Panc1 (cell line): ENCODE measurements at regions of chr11 and their contacts with region 1.

Region 1: DNA sequence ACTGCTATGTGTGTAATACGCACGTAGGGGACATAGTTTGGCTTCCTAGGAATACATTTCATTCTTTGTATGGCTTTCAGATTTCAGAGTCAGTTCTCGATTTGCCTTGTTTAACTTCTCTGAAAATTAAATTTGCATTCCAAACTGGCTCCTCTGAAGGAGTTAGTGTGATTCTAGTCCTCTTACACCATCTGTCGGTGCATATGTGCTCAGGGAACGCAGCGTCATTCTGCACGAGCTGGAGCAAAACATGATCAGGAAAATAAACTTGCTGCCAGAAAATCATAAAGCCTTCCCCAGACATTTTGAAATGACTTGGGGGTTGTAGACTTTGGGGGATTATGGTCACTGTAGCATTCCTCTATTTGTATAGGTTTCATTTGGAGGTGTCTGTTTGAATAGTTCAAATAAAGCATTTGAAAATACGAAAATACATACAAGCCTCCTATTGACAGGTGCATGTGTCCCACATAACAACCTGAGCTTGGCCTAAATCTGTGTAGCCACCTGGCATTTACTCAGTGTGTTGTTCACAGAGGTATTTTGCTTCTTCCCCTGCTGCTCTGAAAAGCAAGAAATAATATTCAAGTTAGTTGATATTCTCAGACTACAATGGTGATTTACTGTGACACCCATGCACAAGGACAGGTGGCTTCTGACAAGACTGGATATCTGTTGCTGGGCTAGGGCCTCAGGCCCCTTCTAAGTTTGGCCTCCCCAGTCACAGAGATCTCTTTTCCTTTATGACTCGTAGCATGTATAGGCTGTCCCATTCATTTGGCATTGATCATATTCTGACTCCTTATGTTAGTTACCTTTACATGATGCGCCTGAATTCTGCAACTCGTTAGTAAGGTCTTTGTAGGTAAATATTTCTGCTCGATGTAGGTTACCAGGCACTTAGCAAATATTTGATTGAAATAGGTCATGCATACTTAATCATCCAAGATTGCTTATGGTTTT is 81.6 kb upstream of the SORL1-AS1 start:
- DNase-seq: no peak
- ATAC-seq: no peak
- H3K4me3 ChIP-seq: no peak overlapping the region
- H3K27ac ChIP-seq: no peak overlapping the region
- H3K4me1 ChIP-seq: no peaks in the 10 kb centered on the region
- H3K27me3 ChIP-seq: no peaks in the 10 kb centered on the region
- CTCF ChIP-seq: peak; percentile 48

Region 2: DNA sequence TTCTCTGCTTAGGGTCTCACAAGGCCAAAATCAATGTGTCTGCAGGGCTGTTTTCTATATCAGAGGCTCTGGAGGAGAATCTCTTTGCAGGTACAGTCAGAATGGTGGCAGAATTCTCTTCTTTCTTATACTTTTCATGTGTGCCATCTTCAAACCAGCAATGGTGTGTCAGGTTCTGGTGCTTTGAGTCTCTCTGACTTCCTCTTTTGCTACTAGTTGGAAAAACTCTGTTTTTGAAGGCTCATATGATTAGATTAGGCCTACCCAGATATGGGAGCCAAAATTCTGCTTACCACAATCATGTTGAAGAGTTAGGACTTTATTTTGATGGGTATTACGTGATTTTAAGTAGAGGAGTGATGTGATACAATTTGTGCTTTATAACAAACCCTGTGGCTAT is 452.2 kb before region 1 on chr11:
- CTCF ChIA-PET with region 1: no interaction called
- POLR2A ChIA-PET with region 1: no interaction called
- in situ Hi-C with region 1: no loop called
- intact Hi-C with region 1: no loop called
- DNase-seq: no peak
- ATAC-seq: no peak
- H3K4me3 ChIP-seq: no peak overlapping the region
- H3K27ac ChIP-seq: no peak overlapping the region
- H3K4me1 ChIP-seq: no peaks in the 10 kb centered on the region
- H3K27me3 ChIP-seq: no peaks in the 10 kb centered on the region
- CTCF ChIP-seq: no peak

Region 3: DNA sequence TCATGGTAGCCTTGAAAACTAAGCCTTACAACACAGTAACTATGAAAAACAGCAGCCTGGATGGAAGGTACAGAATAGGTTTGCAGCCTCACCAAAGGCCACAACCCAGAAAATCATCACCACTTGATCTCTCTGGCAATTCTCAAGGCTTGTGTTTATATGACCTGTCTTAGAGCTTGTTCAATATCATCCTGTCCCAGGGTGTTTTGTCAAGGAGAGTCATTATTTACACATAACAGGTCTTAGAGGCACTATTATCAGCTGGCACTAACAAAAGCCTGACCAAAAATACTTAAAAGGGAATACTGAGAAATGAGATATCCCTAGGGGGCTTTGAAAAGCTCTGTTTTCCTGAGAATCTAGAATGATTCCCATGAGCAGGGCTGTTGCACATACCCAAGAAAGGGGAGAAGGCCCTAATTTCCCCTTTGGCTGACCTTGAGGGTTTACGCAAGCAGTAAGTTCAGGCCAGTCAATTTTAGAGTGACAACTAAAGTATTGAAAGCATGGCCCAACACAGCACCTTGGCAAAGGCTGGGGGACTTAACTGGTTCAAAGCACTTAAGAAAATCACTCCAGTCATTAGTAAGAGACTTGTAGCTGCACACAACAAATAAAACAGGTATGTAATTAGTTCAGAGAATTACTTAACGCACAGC is 234.0 kb before region 1 on chr11:
- CTCF ChIA-PET with region 1: no interaction called
- POLR2A ChIA-PET with region 1: no interaction called
- in situ Hi-C with region 1: no loop called
- intact Hi-C with region 1: no loop called
- DNase-seq: no peak
- ATAC-seq: no peak
- H3K4me3 ChIP-seq: no peak overlapping the region
- H3K27ac ChIP-seq: no peak overlapping the region
- H3K4me1 ChIP-seq: 0 out of 2 replicates have a peak, but pooled peaks cover 3% of the 10 kb centered on the region
- H3K27me3 ChIP-seq: no peaks in the 10 kb centered on the region
- CTCF ChIP-seq: no peak

Region 4: GRCh38 chr11:121318848-121319834 is 215.3 kb before region 1 on chr11:
- CTCF ChIA-PET with region 1: no interaction called
- POLR2A ChIA-PET with region 1: no interaction called
- in situ Hi-C with region 1: no loop called
- intact Hi-C with region 1: loop called (anchors 5 kb)
- DNase-seq: peak; percentile 38
- ATAC-seq: peak; percentile 68; the same call in 1 of the 2 replicates
- H3K4me3 ChIP-seq: no peak overlapping the region
- H3K27ac ChIP-seq: no peak overlapping the region
- H3K4me1 ChIP-seq: no peaks in the 10 kb centered on the region
- H3K27me3 ChIP-seq: no peaks in the 10 kb centered on the region; the same call in 1 of the 2 replicates
- CTCF ChIP-seq: peak; percentile 87

Region 5: DNA sequence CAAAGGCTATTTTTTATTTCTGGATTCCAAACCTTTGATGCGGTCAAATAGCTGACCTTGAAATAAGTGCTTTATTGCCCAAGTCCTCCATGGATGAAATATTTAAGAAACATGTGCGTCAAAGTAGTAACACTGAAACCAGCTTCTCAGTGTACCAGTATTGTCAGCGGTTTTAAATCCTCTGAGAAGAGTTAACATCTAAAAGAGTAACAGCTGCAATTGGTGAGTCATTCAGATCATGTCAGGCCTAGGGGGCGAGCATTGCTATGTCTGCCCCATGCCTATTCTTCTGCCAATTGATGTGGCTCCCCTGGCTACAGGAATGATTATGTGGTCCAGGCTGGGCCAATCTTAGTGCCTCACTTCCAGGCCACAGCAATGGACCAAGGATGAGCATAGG is 181.6 kb after region 1 on chr11:
- CTCF ChIA-PET with region 1: no interaction called
- POLR2A ChIA-PET with region 1: no interaction called
- in situ Hi-C with region 1: no loop called
- intact Hi-C with region 1: no loop called
- DNase-seq: no peak
- ATAC-seq: no peak
- H3K4me3 ChIP-seq: no peak overlapping the region
- H3K27ac ChIP-seq: no peak overlapping the region
- H3K4me1 ChIP-seq: no peaks in the 10 kb centered on the region
- H3K27me3 ChIP-seq: no peaks in the 10 kb centered on the region
- CTCF ChIP-seq: no peak